A549 (cell line): ENCODE measurements at regions of chr2 and their contacts with region 1.

Region 1: GRCh38 chr2:196453613-196454047 is 185.9 kb upstream of the CCDC150 start:
- DNase-seq: peak; percentile 10 to 59
- ATAC-seq: peak; percentile 70 to 85; a peak in 4 of 6 replicates
- H3K4me3 ChIP-seq: no peak overlapping the region
- H3K27ac ChIP-seq: no peak overlapping the region
- H3K4me1 ChIP-seq: no peaks in the 10 kb centered on the region
- CTCF ChIP-seq: peak; percentile 78
- EP300 ChIP-seq: no peak
- POLR2A ChIP-seq: no peak
- RAD21 ChIP-seq: peak; percentile 82 to 84

Region 2: GRCh38 chr2:196076778-196077568 is 376.7 kb before region 1 on chr2:
- CTCF ChIA-PET with region 1: interaction called, 19 read pairs
- POLR2A ChIA-PET with region 1: interaction called, 4 read pairs
- DNase-seq: no peak
- ATAC-seq: no peak
- H3K4me3 ChIP-seq: no peak overlapping the region
- H3K27ac ChIP-seq: no peak overlapping the region
- H3K4me1 ChIP-seq: no peaks in the 10 kb centered on the region; the same call in 2 of the 3 replicates
- CTCF ChIP-seq: no peak
- EP300 ChIP-seq: no peak
- POLR2A ChIP-seq: no peak
- RAD21 ChIP-seq: no peak

Region 3: GRCh38 chr2:196277002-196277401 is 176.6 kb before region 1 on chr2:
- CTCF ChIA-PET with region 1: no interaction called
- POLR2A ChIA-PET with region 1: no interaction called
- DNase-seq: no peak
- ATAC-seq: no peak
- H3K4me3 ChIP-seq: no peak overlapping the region
- H3K27ac ChIP-seq: no peak overlapping the region; a peak in 1 of 6 replicates
- H3K4me1 ChIP-seq: peaks cover 37% of the 10 kb centered on the region
- CTCF ChIP-seq: peak; percentile 48
- EP300 ChIP-seq: no peak
- POLR2A ChIP-seq: no peak
- RAD21 ChIP-seq: peak; percentile 46 to 52; a peak in 4 of 5 replicates

Region 4: DNA sequence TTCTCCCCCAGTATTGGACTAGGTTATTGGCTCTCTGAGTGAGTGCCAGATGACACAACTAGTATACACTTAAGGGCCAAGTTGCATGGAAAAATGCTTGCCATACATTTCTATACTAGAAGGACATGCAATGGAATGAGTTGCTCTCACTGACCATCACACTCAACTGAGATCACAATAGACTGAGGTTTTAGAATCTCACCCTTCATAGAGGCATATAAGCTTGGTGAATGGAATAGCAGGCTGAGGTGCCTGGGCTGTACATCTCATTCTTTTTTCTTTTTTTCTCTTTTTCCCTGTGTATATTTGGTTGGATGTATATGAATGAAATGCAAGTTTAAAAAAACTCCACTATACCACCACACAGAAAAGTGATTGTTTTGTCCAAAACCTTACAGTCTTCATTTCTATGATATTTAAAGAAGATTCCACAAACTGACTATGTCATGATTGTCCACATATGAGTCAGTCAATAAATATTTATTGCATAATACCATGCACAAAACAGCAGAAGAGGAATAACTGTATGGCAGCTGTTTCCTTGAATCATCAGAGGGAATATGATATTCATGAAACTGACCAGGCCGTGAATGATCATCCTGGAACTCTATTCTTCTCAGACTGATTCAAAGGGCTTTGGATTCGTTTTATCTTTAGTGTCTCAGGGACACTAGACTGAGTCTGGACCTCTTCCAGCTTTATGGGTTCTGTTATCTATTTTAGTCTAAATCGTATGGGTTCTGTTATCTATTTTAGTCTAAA is 159.7 kb before region 1 on chr2:
- CTCF ChIA-PET with region 1: interaction called, 24 read pairs
- POLR2A ChIA-PET with region 1: no interaction called
- DNase-seq: peak; percentile 28 to 63
- ATAC-seq: peak; percentile 88 to 90
- H3K4me3 ChIP-seq: no peak overlapping the region
- H3K27ac ChIP-seq: peak overlapping the region; percentile 61 to 74
- H3K4me1 ChIP-seq: peaks cover 28% of the 10 kb centered on the region
- CTCF ChIP-seq: no peak
- EP300 ChIP-seq: peak in 1 of 2 experiments; percentile 55; a peak in 1 of 5 replicates
- POLR2A ChIP-seq: no peak
- RAD21 ChIP-seq: 0 out of 5 replicates have a peak, but pooled peaks of 1 of the 2 experiments have one; percentile 29

Region 5: DNA sequence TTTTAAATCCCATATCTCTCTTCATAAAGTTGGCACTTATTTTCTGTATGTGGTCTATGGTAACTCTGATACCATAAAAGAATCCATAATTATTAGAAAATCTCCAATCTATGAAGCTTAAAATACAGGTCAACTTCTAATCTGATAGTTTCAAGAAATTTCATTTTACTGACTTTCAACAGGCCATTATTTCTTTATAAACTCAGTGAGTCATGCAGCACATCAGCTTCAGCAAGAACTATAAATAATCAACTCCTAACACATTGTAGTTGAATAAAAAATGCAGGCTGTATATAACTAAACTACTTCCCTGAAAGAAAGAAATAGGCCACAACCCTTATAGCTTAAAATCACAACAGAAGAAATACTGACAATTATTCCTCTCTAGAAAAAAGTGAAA is 18.4 kb before region 1 on chr2:
- CTCF ChIA-PET with region 1: interaction called, 16 read pairs
- POLR2A ChIA-PET with region 1: no interaction called
- DNase-seq: no peak
- ATAC-seq: no peak
- H3K4me3 ChIP-seq: no peak overlapping the region
- H3K27ac ChIP-seq: no peak overlapping the region
- H3K4me1 ChIP-seq: no peaks in the 10 kb centered on the region
- CTCF ChIP-seq: no peak
- EP300 ChIP-seq: no peak
- POLR2A ChIP-seq: no peak
- RAD21 ChIP-seq: no peak

Region 6: DNA sequence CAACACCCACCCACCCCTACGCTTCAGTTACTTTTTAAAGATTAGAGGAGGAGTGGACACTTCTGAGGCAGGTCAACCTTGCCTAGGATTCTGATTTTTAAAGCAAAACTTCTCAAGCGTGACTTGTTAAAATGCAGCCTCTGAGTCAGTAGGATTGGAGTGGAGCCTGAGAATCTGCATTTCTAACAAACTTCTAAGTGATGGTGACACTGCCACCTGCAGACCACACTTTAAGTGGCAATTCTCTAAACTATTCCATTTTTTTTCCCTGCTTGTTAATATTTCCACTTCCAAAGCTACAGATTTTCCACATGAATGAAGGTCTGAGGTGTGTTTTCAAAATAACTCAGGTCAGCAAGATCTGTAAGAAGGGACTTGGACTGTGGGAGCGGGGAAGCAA is 14.8 kb after region 1 on chr2:
- CTCF ChIA-PET with region 1: interaction called, 28 read pairs
- POLR2A ChIA-PET with region 1: no interaction called
- DNase-seq: no peak
- ATAC-seq: no peak
- H3K4me3 ChIP-seq: no peak overlapping the region
- H3K27ac ChIP-seq: no peak overlapping the region
- H3K4me1 ChIP-seq: no peaks in the 10 kb centered on the region
- CTCF ChIP-seq: no peak
- EP300 ChIP-seq: no peak
- POLR2A ChIP-seq: no peak
- RAD21 ChIP-seq: no peak

Region 7: GRCh38 chr2:196504788-196505187 is 51.2 kb after region 1 on chr2:
- CTCF ChIA-PET with region 1: no interaction called
- POLR2A ChIA-PET with region 1: no interaction called
- DNase-seq: no peak
- ATAC-seq: no peak
- H3K4me3 ChIP-seq: no peak overlapping the region
- H3K27ac ChIP-seq: no peak overlapping the region
- H3K4me1 ChIP-seq: peaks cover 12% of the 10 kb centered on the region; the same call in 2 of the 3 replicates
- CTCF ChIP-seq: no peak
- EP300 ChIP-seq: no peak
- POLR2A ChIP-seq: no peak
- RAD21 ChIP-seq: no peak

Region 8: DNA sequence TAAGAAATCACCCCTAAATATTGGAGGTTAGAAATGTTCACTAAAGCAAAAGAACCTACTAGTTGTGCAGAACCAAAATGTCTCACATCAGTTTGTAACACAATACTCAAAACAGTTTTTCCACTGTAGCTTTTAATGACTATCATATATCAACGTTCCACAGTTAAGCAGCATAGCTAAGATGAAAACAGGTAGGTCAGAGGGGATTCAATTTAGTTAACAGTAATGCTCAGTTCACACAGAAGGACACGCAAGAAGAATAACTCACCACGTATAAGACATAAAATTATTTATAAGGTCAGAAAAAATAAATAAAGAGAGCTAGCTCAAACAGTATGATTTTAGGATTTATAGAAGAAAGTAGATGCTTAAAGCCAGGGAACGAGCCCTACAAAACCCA is 67.0 kb after region 1 on chr2:
- CTCF ChIA-PET with region 1: no interaction called
- POLR2A ChIA-PET with region 1: no interaction called
- DNase-seq: no peak
- ATAC-seq: no peak
- H3K4me3 ChIP-seq: no peak overlapping the region
- H3K27ac ChIP-seq: no peak overlapping the region
- H3K4me1 ChIP-seq: no peaks in the 10 kb centered on the region
- CTCF ChIP-seq: no peak
- EP300 ChIP-seq: no peak
- POLR2A ChIP-seq: no peak
- RAD21 ChIP-seq: no peak

Region 9: DNA sequence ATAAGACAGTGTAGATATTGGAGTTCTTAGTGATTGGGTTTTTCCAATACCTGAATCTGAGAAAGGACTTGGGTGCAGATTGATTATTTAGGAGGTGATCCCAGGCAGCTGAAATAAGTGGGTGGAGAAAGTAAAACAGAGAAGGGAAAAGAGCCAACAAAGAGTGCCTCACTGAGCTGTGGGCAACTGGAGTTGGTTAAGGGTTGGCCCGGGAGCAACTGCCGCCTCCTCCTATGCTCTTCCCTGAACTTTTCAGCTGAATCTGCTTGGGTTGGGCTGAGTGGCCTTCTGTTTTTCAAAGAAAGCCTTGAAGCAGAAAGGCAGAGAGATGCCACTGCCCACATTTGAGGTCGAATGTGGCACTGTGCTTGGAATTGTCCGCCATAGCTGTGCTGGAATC is 165.0 kb after region 1 on chr2:
- CTCF ChIA-PET with region 1: no interaction called
- POLR2A ChIA-PET with region 1: no interaction called
- DNase-seq: no peak
- ATAC-seq: no peak
- H3K4me3 ChIP-seq: no peak overlapping the region
- H3K27ac ChIP-seq: no peak overlapping the region
- H3K4me1 ChIP-seq: no peaks in the 10 kb centered on the region
- CTCF ChIP-seq: no peak
- EP300 ChIP-seq: no peak
- POLR2A ChIP-seq: no peak
- RAD21 ChIP-seq: no peak